ENCODE measurements at regions of chr4 and their contacts with region 1.

Region 1: GRCh38 chr4:8241895-8242696 is 27.5 kb upstream of the HTRA3 start:
- DNase-seq: peak; percentile 52 to 89 (median 75)
- ATAC-seq: peak; percentile 84
- H3K4me3 ChIP-seq: no peak overlapping the region
- H3K4me3 Mint-ChIP-seq: no peak overlapping the region
- H3K27ac ChIP-seq: no peak overlapping the region
- H3K27ac Mint-ChIP-seq: peak overlapping the region in 2 of 9 donors; percentile 51 to 83
- H3K4me1 ChIP-seq: peaks cover 0 to 4% of the 10 kb centered on the region in 2 donors
- H3K4me1 Mint-ChIP-seq: peaks cover 0 to 4% (median 3%) of the 10 kb centered on the region in 7 donors
- H3K27me3 ChIP-seq: no peaks in the 10 kb centered on the region
- H3K27me3 Mint-ChIP-seq: no peaks in the 10 kb centered on the region

Region 2: DNA sequence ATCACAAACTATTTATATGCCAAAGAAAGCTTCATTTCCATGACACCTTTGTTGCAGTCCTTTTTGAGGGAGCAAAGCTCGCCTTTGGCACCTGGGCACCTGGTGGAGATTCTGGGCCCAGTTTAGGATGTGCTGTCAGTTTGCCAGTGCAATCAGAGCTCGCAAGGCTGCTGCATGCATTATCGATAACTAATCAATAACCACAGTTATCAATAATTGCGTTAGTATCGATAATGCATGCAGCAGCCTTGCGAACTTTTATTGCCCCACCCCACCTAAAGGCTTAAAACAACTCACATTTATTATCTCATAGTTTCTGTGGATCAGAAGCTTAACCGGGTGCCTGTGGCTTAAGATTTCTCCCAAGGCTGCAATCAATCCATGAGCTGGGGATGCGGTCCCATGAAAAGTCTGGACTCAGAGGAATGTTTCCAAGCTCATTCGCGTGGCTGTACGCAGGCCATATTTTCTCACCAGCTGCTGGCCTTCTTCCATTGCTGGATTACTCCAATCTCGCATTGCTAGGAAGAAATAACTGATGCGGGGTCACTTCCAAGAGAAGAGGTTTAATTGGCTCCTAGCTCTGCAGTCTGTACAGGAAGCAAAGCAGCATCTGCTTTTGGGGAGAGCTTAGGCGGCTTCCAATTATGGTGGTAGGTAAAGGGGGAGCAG is 296.3 kb before region 1 on chr4:
- CTCF ChIA-PET with region 1: no interaction called
- POLR2A ChIA-PET with region 1: no interaction called
- intact Hi-C with region 1: no loop called
- DNase-seq: no peak
- ATAC-seq: no peak
- H3K4me3 ChIP-seq: no peak overlapping the region
- H3K4me3 Mint-ChIP-seq: no peak overlapping the region
- H3K27ac ChIP-seq: no peak overlapping the region
- H3K27ac Mint-ChIP-seq: no peak overlapping the region
- H3K4me1 ChIP-seq: peaks cover 0 to 3% of the 10 kb centered on the region in 2 donors
- H3K4me1 Mint-ChIP-seq: peaks cover 6 to 19% (median 17%) of the 10 kb centered on the region in 7 donors
- H3K27me3 ChIP-seq: no peaks in the 10 kb centered on the region
- H3K27me3 Mint-ChIP-seq: peaks cover 0 to 24% (median 7%) of the 10 kb centered on the region in 5 donors

Region 3: GRCh38 chr4:8176547-8177399 is 65.3 kb before region 1 on chr4:
- CTCF ChIA-PET with region 1: interaction called, 6 read pairs
- POLR2A ChIA-PET with region 1: no interaction called
- intact Hi-C with region 1: loop called (anchors 1 to 2 kb)
- DNase-seq: peak in 7 of 9 donors; percentile 37 to 60 (median 54)
- ATAC-seq: peak; percentile 89
- H3K4me3 ChIP-seq: no peak overlapping the region
- H3K4me3 Mint-ChIP-seq: no peak overlapping the region
- H3K27ac ChIP-seq: no peak overlapping the region
- H3K27ac Mint-ChIP-seq: peak overlapping the region in 2 of 9 donors; percentile 48 to 49
- H3K4me1 ChIP-seq: no peaks in the 10 kb centered on the region
- H3K4me1 Mint-ChIP-seq: peaks cover 0 to 5% (median 0%) of the 10 kb centered on the region in 7 donors
- H3K27me3 ChIP-seq: no peaks in the 10 kb centered on the region
- H3K27me3 Mint-ChIP-seq: peaks cover 0 to under 1% (median 0%) of the 10 kb centered on the region in 5 donors

Region 4: DNA sequence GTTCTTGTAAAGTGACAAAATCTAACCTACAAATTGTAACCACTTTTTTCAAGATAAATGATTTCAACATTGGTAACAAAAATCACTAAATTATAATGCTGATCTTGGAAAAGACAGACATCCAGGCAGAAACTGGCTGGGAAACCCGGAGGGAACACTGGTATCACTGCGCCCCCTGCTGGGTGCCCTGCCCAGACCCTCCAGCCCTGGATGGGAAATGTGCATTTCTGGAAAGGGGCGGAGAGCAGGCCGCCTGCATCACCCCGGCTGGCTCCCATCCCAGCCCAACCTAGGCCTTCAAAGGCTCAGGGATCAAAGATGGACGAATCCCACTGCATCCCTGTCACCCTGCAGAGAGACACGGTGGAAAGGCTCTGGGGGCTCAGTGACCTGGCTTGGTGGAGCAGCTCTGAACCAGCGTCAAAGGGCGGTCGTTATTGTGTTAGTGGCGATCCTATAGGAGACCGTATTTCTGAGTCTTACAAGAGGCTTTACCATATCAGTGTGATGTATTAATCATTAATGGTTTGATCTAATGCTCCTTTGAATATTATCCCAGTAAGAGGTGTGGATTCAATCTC is 161.2 kb after region 1 on chr4:
- CTCF ChIA-PET with region 1: interaction called, 3 read pairs
- POLR2A ChIA-PET with region 1: no interaction called
- intact Hi-C with region 1: loop called (anchors 1 kb)
- DNase-seq: peak in 7 of 9 donors; percentile 17 to 52 (median 33)
- ATAC-seq: peak; percentile 81
- H3K4me3 ChIP-seq: no peak overlapping the region
- H3K4me3 Mint-ChIP-seq: no peak overlapping the region
- H3K27ac ChIP-seq: no peak overlapping the region
- H3K27ac Mint-ChIP-seq: no peak overlapping the region
- H3K4me1 ChIP-seq: no peaks in the 10 kb centered on the region
- H3K4me1 Mint-ChIP-seq: peaks cover 0 to 2% (median 0%) of the 10 kb centered on the region in 7 donors
- H3K27me3 ChIP-seq: no peaks in the 10 kb centered on the region
- H3K27me3 Mint-ChIP-seq: no peaks in the 10 kb centered on the region

Region 5: DNA sequence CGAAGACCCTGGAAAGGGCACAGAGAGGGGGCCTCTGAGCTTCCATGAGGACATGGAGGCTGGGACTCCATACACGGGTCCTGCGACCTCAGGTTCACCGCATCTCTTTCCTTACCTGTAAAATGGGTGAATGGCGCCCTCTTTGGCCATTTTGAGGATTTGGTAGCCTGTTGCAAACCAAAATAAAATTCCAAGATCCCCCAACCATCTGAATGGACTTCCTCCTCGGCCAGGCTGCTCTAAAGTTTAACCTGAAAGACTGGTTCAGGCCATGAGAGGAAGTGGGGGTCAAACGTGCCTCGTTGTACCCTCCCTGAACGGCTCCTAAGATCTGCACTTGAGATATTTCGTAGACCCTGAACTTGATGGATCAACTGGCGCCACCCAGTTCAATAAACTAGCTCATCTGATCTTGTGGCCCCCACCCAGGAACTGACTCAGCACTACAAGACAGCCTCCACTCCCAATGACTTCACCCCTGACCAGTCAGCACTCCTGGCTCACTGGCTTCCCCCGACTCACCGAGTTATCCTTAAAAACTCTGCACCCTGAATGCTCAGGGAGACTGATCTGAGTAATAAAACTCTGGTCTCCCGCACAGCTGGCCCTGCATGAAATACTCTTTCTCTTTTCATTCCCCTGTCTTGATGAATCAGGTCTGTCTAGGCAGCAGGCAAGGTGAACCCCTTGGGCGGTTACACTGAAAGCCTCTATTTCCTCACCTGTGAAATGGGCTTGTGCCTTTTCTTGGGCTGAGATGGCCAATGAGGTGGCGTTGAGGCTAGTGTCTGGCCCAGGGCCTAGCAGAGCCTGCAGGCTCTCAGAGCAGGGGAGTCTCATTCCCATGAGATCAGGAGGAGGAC is 305.2 kb after region 1 on chr4:
- CTCF ChIA-PET with region 1: no interaction called
- POLR2A ChIA-PET with region 1: no interaction called
- intact Hi-C with region 1: loop called in 1 of 2 experiments (anchors 10 kb)
- DNase-seq: no peak
- ATAC-seq: no peak
- H3K4me3 ChIP-seq: no peak overlapping the region
- H3K4me3 Mint-ChIP-seq: no peak overlapping the region
- H3K27ac ChIP-seq: no peak overlapping the region
- H3K27ac Mint-ChIP-seq: no peak overlapping the region
- H3K4me1 ChIP-seq: no peaks in the 10 kb centered on the region
- H3K4me1 Mint-ChIP-seq: peaks cover 0 to 2% (median 0%) of the 10 kb centered on the region in 7 donors
- H3K27me3 ChIP-seq: no peaks in the 10 kb centered on the region
- H3K27me3 Mint-ChIP-seq: peaks cover 0 to 7% (median 0%) of the 10 kb centered on the region in 5 donors

Region 6: DNA sequence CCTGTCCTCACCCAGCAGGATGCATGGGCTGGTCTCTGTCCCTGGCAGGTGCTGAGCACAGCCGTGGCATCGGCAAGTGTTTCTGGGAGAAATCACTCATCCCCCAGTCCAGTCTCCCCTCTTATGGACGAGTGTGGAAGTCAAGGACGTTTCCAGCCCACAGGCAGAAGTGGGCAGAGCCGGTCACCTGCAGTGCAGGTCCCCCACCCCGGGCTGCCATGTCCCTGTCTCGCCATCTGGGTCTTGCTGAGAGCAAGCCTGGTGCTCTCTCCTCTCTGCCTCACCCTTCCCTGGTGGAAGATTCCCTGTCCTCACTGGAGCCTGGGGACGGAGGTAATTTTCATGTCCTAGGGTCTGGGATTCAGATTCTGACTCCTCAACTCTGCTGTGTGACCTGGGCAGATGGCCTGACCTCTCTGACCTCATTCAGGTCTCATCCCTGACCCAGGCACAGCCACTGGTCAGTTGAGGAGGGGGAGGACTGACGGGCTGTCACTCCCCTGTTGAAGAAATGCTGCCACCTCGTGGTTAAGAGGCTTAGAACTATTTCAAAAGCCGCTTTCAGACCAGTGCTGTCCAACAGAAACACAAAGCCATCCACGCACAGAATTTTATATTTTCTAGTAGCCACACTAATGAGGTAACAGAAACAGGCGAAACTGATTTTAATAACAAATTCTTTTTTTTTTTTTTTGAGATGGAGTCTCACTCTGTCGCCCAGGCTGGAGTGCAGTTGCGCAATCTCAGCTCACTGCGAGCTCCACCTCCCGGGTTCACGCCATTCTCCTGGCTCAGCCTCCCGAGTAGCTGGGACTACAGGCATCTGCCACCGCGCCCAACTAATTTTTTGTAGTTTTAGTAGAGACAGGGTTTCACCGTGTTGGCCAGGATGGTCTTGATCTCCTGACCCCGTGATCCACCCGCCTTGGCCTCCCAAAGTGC is 352.3 kb after region 1 on chr4:
- CTCF ChIA-PET with region 1: no interaction called
- POLR2A ChIA-PET with region 1: no interaction called
- intact Hi-C with region 1: loop called (anchors 1 to 2 kb)
- DNase-seq: no peak
- ATAC-seq: no peak
- H3K4me3 ChIP-seq: no peak overlapping the region
- H3K4me3 Mint-ChIP-seq: no peak overlapping the region
- H3K27ac ChIP-seq: no peak overlapping the region
- H3K27ac Mint-ChIP-seq: no peak overlapping the region
- H3K4me1 ChIP-seq: no peaks in the 10 kb centered on the region
- H3K4me1 Mint-ChIP-seq: peaks cover 0 to 3% (median 0%) of the 10 kb centered on the region in 7 donors
- H3K27me3 ChIP-seq: peaks cover 0 to 4% of the 10 kb centered on the region in 2 donors
- H3K27me3 Mint-ChIP-seq: peaks cover 12 to 56% (median 26%) of the 10 kb centered on the region in 5 donors